ENCODE measurements at regions of chr2 and their contacts with region 1.

Region 1: GRCh38 chr2:86825693-86826381 is 35.1 kb upstream of the CD8A start:
- DNase-seq: peak; percentile 54 to 96 (median 88)
- ATAC-seq: peak; percentile 77 to 89
- H3K4me3 Mint-ChIP-seq: peak overlapping the region; percentile 86 to 99 (median 95)
- H3K27ac Mint-ChIP-seq: peak overlapping the region; percentile 85 to 99 (median 96)
- H3K4me1 Mint-ChIP-seq: peaks cover 45 to 81% (median 71%) of the 10 kb centered on the region in 4 donors
- H3K27me3 Mint-ChIP-seq: no peaks in the 10 kb centered on the region

Region 2: DNA sequence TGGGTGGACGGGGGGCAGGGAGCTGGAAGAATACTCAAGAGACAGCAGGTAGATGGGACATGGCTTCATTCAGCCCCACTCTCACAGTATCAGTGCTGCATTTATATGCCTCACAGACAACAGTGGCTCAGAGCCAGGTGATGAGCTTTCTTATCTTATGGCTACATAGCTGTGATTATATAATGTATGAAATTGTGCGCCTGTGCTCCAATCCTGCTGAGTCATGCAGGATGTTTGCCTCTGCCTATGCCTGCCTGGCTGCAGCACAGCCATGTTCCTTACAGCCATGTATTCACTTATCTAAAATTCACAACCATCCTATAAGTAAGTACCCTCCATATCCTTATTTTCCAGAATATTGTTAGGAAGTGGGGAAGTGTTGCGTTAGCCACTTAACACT is 164.5 kb before region 1 on chr2:
- POLR2A ChIA-PET with region 1: no interaction called
- DNase-seq: peak in 1 of 10 donors; percentile 10
- ATAC-seq: no peak
- H3K4me3 Mint-ChIP-seq: no peak overlapping the region
- H3K27ac Mint-ChIP-seq: no peak overlapping the region
- H3K4me1 Mint-ChIP-seq: no peaks in the 10 kb centered on the region
- H3K27me3 Mint-ChIP-seq: peaks cover 0 to 2% (median 0%) of the 10 kb centered on the region in 5 donors

Region 3: GRCh38 chr2:86671337-86671981 is 154.4 kb before region 1 on chr2:
- POLR2A ChIA-PET with region 1: no interaction called
- DNase-seq: no peak
- ATAC-seq: no peak
- H3K4me3 Mint-ChIP-seq: no peak overlapping the region
- H3K27ac Mint-ChIP-seq: no peak overlapping the region
- H3K4me1 Mint-ChIP-seq: no peaks in the 10 kb centered on the region
- H3K27me3 Mint-ChIP-seq: no peaks in the 10 kb centered on the region

Region 4: DNA sequence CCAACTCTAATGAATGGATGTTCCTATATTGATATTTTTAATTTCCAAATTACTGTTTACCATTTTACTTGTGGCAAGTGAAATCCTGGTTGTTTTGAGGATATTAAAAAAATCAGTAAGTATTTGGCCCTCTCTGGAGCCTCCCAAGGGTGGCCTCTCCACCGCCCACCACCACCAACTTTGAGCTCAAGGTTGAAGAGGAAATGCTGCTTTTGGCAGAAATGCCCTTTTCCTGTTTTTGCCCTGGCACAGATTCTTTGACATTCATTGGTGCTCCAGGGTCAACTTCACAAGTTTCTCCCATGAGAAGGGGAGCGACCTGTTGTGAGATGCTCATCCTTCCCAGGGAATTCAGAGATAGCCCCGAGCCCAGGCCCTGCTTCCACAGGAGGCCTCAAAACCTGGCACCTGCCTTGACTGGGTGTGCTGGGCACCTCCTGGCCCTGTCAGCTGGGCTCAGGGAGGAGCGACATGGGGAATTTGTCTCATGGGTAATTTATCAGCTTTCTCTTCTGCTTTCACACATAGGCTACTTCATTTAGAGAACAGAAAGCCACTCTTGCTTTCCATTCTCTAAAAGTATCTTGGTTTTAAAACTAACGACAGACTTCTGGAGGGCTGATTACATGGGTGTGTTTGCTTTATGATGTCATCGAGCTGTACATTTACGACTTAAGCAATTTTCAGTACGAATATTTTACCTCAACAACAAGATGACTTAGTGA is 42.1 kb before region 1 on chr2:
- POLR2A ChIA-PET with region 1: interaction called, 172 read pairs
- DNase-seq: peak in 4 of 10 donors; percentile 45 to 76 (median 62)
- ATAC-seq: peak; percentile 2 to 9
- H3K4me3 Mint-ChIP-seq: peak overlapping the region; percentile 2 to 95 (median 59)
- H3K27ac Mint-ChIP-seq: peak overlapping the region; percentile 96 to 100 (median 100)
- H3K4me1 Mint-ChIP-seq: peaks cover 36 to 83% (median 78%) of the 10 kb centered on the region in 4 donors
- H3K27me3 Mint-ChIP-seq: peaks cover 0 to 7% (median 0%) of the 10 kb centered on the region in 5 donors

Region 5: GRCh38 chr2:86790676-86791572 is 34.9 kb before region 1 on chr2 and contains the start of gene CD8A:
- POLR2A ChIA-PET with region 1: interaction called, 172 read pairs
- DNase-seq: peak; percentile 65 to 92 (median 80)
- ATAC-seq: peak; percentile 25 to 32
- H3K4me3 Mint-ChIP-seq: peak within 1 kb of the TSS; percentile 90 to 99 (median 96)
- H3K27ac Mint-ChIP-seq: peak within 1 kb of the TSS; percentile 96 to 100 (median 100)
- H3K4me1 Mint-ChIP-seq: peaks cover 53 to 83% (median 73%) of the 10 kb centered on the region in 4 donors
- H3K27me3 Mint-ChIP-seq: peaks cover 0 to 14% (median 0%) of the 10 kb centered on the region in 5 donors
- polyA plus RNA-seq, gene CD8A: 885 to 1,018 (median 934) TPM

Region 6: DNA sequence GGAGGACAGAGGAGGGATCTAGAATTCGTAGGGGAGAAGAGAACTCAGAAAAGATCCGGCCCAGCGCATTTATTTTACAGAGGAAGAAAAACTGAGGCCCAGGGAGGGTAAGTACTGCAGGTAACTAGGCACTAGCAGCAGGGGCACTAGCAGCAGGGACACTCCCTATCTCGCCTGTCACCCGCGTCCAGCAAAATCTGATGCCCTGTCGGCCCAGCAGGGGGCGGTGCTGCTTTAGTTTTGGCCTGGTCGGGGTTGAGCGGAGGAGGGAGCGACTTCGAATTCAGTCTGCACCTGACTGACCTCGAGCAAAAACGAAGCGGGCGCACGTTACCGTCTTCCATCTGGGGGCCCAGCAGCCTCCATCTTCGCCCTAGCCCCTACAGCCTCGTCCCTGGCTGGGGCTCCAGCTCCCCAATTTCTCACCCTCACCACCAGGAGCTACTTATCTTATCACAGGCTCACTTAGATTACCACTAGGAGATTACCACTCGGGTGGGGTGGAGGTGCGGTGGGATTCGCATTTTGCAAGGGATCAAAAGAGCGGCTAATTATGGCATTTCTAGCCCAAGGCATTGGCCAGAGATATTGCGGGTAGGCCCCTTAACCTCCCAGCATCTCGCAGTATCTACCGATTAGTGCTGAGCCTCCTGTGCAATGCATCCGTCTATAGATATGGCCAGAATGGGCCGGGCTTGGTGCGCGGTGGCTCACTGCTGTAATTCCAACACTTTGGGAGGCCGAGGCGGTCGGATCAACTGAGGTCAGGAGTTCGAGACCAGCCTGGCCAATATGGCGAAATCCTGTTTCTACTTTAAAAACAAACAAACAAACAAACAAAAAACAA is 17.3 kb before region 1 on chr2:
- POLR2A ChIA-PET with region 1: interaction called, 362 read pairs
- DNase-seq: peak; percentile 93 to 98 (median 96)
- ATAC-seq: peak; percentile 70 to 76
- H3K4me3 Mint-ChIP-seq: peak overlapping the region; percentile 86 to 100 (median 98)
- H3K27ac Mint-ChIP-seq: peak overlapping the region; percentile 93 to 100 (median 98)
- H3K4me1 Mint-ChIP-seq: peaks cover 33 to 75% (median 65%) of the 10 kb centered on the region in 4 donors
- H3K27me3 Mint-ChIP-seq: peaks cover 0 to 14% (median 0%) of the 10 kb centered on the region in 5 donors

Region 7: DNA sequence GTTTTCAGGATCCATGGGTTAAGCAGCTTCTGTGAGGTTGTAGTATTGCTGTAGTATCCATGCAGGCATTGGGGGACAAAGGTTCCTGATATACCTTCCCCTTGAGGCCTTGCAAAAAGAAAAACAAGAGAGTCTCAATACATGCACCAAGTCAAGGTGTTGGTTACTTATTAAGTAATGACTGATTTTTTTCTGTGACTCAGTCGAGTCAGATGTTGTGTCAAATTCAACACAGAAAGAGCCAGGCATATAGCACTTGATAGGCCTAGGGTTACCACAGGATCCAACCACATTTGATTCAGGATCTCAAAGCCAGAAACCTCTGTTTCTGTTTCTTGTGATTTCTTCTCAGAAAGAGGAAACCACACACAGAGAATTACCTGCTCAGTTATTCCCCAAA is 10.2 kb before region 1 on chr2:
- POLR2A ChIA-PET with region 1: interaction called, 362 read pairs
- DNase-seq: peak in 1 of 10 donors; percentile 60
- ATAC-seq: peak; percentile 67 to 68
- H3K4me3 Mint-ChIP-seq: peak overlapping the region; percentile 36 to 84 (median 76)
- H3K27ac Mint-ChIP-seq: peak overlapping the region; percentile 89 to 99 (median 96)
- H3K4me1 Mint-ChIP-seq: peaks cover 51 to 85% (median 81%) of the 10 kb centered on the region in 4 donors
- H3K27me3 Mint-ChIP-seq: no peaks in the 10 kb centered on the region